Endothelial cell of umbilical vein (primary cell): ENCODE measurements at regions of chr6 and their contacts with region 1.

Region 1: GRCh38 chr6:12011276-12012076 is 636 bp upstream of the HIVEP1 start:
- DNase-seq: peak; percentile 96
- H3K4me3 ChIP-seq: peak overlapping the region in 1 of 3 experiments; percentile 71
- H3K27ac ChIP-seq: peak overlapping the region; percentile 98
- H3K4me1 ChIP-seq: peaks cover 38% of the 10 kb centered on the region
- H3K27me3 ChIP-seq: no peaks in the 10 kb centered on the region
- CTCF ChIP-seq: no peak
- POLR2A ChIP-seq: peak; percentile 7

Region 2: GRCh38 chr6:11585426-11586016 is 426.0 kb before region 1 on chr6:
- CTCF ChIA-PET with region 1: interaction called, 3 read pairs
- POLR2A ChIA-PET with region 1: no interaction called
- dilution Hi-C with region 1: no loop called
- intact Hi-C with region 1: loop called (anchors 1 kb)
- DNase-seq: peak; percentile 83
- H3K4me3 ChIP-seq: no peak overlapping the region
- H3K27ac ChIP-seq: peak overlapping the region; percentile 79
- H3K4me1 ChIP-seq: peaks cover 29% of the 10 kb centered on the region
- H3K27me3 ChIP-seq: no peaks in the 10 kb centered on the region
- CTCF ChIP-seq: peak; percentile 41 to 42
- POLR2A ChIP-seq: no peak

Region 3: GRCh38 chr6:11700118-11700718 is 311.3 kb before region 1 on chr6:
- CTCF ChIA-PET with region 1: interaction called, 4 read pairs
- POLR2A ChIA-PET with region 1: no interaction called
- dilution Hi-C with region 1: no loop called
- intact Hi-C with region 1: loop called (anchors 1 kb)
- DNase-seq: peak; percentile 47
- H3K4me3 ChIP-seq: no peak overlapping the region
- H3K27ac ChIP-seq: no peak overlapping the region
- H3K4me1 ChIP-seq: no peaks in the 10 kb centered on the region
- H3K27me3 ChIP-seq: no peaks in the 10 kb centered on the region
- CTCF ChIP-seq: peak in 1 of 2 donors; percentile 16
- POLR2A ChIP-seq: no peak

Region 4: DNA sequence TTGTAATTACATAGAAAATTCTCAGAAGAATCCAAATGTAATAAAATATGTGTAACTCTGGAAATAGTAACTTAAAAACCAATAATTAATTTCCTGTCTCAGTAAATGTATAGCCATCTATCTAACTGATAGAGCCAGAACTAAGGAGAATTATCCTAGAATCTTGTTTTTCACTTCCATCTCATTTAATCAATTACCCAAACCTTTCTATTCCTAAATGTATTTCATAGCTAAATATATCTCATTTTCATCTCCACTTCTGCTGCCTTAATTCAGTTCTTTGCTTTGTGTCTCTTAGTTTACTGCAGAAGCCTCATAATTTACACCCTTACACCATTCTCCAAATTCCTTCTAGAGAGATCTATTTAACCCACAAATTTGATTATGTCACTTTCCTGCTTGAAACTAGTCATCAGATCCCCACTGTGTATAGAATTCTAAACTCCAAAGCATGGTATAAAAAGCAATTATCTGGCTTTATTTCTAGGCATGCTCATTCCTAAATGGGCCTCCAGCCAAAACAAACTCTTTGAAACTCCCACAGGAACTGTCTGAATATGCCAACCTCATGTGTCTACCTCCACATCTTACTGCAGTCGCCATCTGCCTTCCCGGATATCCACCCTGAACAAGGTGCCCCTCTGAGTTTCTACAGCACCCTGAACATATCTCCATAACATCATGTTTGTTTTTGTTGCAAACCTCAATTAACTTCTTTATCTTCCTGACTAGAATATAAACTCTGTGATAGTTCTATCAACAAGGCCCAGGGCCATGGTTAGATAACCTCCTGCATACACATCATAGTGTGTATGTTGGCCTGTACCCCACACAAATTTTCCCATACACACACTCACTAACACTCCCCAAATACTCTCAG is 162.4 kb before region 1 on chr6:
- CTCF ChIA-PET with region 1: no interaction called
- POLR2A ChIA-PET with region 1: no interaction called
- dilution Hi-C with region 1: no loop called
- intact Hi-C with region 1: loop called (anchors 5 kb)
- DNase-seq: peak; percentile 83
- H3K4me3 ChIP-seq: no peak overlapping the region
- H3K27ac ChIP-seq: no peak overlapping the region
- H3K4me1 ChIP-seq: peaks cover 7% of the 10 kb centered on the region
- H3K27me3 ChIP-seq: peaks cover 6 to 8% of the 10 kb centered on the region in 2 experiments
- CTCF ChIP-seq: no peak
- POLR2A ChIP-seq: no peak

Region 5: GRCh38 chr6:12001004-12001705 is 10.3 kb before region 1 on chr6:
- CTCF ChIA-PET with region 1: no interaction called
- POLR2A ChIA-PET with region 1: no interaction called
- dilution Hi-C with region 1: no loop called
- intact Hi-C with region 1: no loop called
- DNase-seq: no peak
- H3K4me3 ChIP-seq: no peak overlapping the region
- H3K27ac ChIP-seq: no peak overlapping the region
- H3K4me1 ChIP-seq: no peaks in the 10 kb centered on the region
- H3K27me3 ChIP-seq: no peaks in the 10 kb centered on the region
- CTCF ChIP-seq: no peak
- POLR2A ChIP-seq: no peak

Region 6: DNA sequence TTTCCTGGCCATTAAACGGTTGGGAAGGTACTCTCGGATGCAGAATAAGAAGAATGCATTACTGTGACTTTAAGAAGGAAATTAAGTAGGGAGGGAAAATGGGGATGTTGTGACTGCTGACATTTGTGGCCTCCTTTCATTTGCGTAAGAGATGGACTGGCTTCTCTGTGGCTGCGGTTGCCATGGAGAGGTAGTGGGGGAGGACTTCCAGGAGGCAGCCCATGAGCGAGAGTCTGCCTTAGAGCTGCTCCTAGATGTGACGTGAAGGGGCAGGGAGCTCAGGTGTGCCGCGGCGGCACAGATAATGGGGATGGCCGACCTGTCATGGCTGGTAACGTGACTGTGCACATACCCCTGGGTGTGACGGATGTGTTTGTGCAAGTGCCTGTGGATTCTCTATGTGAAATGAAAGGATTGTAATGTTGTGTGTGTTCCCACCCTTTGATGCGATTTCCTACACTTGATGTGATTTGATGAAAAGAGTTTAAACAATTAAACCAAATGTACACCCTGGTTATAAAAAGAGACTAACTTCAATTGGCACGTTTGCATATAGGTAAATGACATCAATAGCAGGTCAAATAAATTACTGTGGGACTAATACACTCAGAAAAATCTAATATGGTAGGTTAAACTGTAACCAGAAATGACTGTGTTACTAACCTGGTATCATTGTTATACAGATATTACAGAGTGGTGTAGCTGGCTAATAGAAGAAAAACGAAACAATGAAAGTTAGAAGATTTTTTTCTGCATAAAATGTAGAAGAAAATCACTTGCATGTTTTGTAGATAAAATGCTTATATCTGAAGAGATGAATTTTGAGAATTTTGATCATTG is 49.5 kb after region 1 on chr6:
- CTCF ChIA-PET with region 1: no interaction called
- POLR2A ChIA-PET with region 1: no interaction called
- dilution Hi-C with region 1: no loop called
- intact Hi-C with region 1: no loop called
- DNase-seq: no peak
- H3K4me3 ChIP-seq: no peak overlapping the region
- H3K27ac ChIP-seq: no peak overlapping the region
- H3K4me1 ChIP-seq: peaks cover 4% of the 10 kb centered on the region
- H3K27me3 ChIP-seq: no peaks in the 10 kb centered on the region
- CTCF ChIP-seq: no peak
- POLR2A ChIP-seq: no peak

Region 7: GRCh38 chr6:12150812-12151432 is 139.4 kb after region 1 on chr6:
- CTCF ChIA-PET with region 1: no interaction called
- POLR2A ChIA-PET with region 1: no interaction called
- dilution Hi-C with region 1: no loop called
- intact Hi-C with region 1: loop called (anchors 5 kb)
- DNase-seq: no peak
- H3K4me3 ChIP-seq: no peak overlapping the region
- H3K27ac ChIP-seq: no peak overlapping the region
- H3K4me1 ChIP-seq: peaks cover 24% of the 10 kb centered on the region
- H3K27me3 ChIP-seq: no peaks in the 10 kb centered on the region
- CTCF ChIP-seq: peak in 1 of 2 donors; percentile 28
- POLR2A ChIP-seq: no peak

Region 8: DNA sequence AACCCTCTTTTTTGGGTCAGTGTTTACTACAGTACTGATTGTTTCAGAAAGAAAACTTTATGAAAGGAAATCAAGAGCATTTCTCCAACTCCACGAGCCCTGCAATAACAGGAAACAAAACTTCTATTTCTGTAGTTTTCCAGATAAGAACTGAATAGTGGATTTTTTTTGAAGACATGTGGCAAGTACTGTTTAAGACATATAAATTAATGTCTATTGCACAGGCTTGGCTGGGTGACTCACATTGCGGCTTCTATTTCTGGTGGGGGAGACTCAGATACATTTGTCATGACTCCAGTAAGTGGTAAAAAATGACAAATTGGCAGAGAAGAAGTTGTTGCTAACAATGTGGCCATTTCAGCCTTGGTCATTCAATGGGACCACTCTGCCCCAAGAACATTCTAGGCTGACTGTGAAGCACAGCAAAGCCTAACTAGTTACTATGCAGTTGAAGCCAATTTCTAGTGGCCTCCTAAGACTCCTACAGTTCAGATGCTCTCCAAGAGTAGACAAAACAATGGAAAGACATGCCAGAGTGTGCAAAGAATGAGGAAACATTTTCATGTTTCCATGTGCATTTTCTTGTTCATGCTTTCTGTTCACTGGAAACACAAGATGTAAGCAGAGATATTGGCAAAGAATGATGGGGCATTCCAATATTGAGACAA is 479.6 kb after region 1 on chr6:
- CTCF ChIA-PET with region 1: no interaction called
- POLR2A ChIA-PET with region 1: no interaction called
- dilution Hi-C with region 1: no loop called
- intact Hi-C with region 1: loop called (anchors 2 kb)
- DNase-seq: peak; percentile 96
- H3K4me3 ChIP-seq: no peak overlapping the region
- H3K27ac ChIP-seq: peak overlapping the region; percentile 93
- H3K4me1 ChIP-seq: peaks cover 39% of the 10 kb centered on the region
- H3K27me3 ChIP-seq: no peaks in the 10 kb centered on the region
- CTCF ChIP-seq: no peak
- POLR2A ChIP-seq: no peak